ENCODE measurements at regions of chr1 and their contacts with region 1.

Region 1: DNA sequence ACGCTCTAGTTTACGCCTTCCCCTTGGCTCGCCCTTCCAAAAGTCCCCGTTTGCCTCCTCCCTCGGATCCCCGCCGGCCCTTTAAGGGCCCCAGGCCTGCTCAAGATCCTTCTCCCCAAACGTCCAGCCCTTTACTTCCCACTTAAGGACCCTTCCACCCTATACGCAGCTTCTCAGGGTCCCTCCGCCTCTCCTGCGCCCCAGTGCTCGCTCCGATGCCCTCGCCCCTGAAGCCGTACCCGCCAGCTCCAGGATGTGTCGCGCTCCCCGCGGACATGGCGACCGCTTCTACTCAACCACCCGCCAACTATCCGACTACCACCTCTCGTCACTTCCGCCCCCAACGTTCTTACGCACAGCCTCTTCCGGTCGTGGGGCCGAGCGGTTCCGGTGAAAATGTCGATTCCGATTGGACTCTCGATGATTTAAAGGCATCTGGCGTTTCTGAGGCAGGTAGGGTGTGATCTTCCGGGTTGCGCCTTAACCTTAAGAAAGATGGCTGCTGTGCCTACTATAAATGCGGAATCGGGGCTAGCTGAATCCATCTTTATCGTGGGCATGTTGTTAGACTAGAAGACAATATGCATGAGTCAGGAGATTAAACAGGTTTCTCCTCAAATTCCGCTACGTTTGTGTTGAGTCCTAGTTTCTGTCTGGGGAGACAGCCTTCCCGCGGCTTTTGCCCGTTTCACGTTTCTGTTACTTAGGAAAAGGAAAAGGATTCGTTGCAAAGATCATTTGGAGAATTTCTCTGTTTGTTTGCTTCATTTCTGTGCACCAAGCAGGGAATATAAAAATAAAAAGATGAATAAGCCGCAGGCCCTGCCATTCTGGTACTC is at the start of gene KHDC4:
- DNase-seq: peak; percentile 97
- ATAC-seq: peak; percentile 97
- H3K4me3 Mint-ChIP-seq: no peak within 1 kb of the TSS
- H3K27ac Mint-ChIP-seq: no peak within 1 kb of the TSS
- H3K4me1 Mint-ChIP-seq: peaks cover 46% of the 10 kb centered on the region
- H3K27me3 Mint-ChIP-seq: no peaks in the 10 kb centered on the region
- total RNA-seq, gene KHDC4: 68.7 to 97.5 TPM

Region 2: GRCh38 chr1:155569988-155570592 is 364.2 kb before region 1 on chr1:
- CTCF ChIA-PET with region 1: no interaction called
- POLR2A ChIA-PET with region 1: no interaction called
- intact Hi-C with region 1: no loop called
- DNase-seq: no peak
- ATAC-seq: no peak
- H3K4me3 Mint-ChIP-seq: no peak overlapping the region
- H3K27ac Mint-ChIP-seq: no peak overlapping the region
- H3K4me1 Mint-ChIP-seq: peaks cover 27% of the 10 kb centered on the region
- H3K27me3 Mint-ChIP-seq: no peaks in the 10 kb centered on the region

Region 3: GRCh38 chr1:155871390-155871789 is 62.9 kb before region 1 on chr1:
- CTCF ChIA-PET with region 1: no interaction called
- POLR2A ChIA-PET with region 1: no interaction called
- intact Hi-C with region 1: no loop called
- DNase-seq: no peak
- ATAC-seq: no peak
- H3K4me3 Mint-ChIP-seq: no peak overlapping the region
- H3K27ac Mint-ChIP-seq: no peak overlapping the region
- H3K4me1 Mint-ChIP-seq: no peaks in the 10 kb centered on the region
- H3K27me3 Mint-ChIP-seq: no peaks in the 10 kb centered on the region

Region 4: DNA sequence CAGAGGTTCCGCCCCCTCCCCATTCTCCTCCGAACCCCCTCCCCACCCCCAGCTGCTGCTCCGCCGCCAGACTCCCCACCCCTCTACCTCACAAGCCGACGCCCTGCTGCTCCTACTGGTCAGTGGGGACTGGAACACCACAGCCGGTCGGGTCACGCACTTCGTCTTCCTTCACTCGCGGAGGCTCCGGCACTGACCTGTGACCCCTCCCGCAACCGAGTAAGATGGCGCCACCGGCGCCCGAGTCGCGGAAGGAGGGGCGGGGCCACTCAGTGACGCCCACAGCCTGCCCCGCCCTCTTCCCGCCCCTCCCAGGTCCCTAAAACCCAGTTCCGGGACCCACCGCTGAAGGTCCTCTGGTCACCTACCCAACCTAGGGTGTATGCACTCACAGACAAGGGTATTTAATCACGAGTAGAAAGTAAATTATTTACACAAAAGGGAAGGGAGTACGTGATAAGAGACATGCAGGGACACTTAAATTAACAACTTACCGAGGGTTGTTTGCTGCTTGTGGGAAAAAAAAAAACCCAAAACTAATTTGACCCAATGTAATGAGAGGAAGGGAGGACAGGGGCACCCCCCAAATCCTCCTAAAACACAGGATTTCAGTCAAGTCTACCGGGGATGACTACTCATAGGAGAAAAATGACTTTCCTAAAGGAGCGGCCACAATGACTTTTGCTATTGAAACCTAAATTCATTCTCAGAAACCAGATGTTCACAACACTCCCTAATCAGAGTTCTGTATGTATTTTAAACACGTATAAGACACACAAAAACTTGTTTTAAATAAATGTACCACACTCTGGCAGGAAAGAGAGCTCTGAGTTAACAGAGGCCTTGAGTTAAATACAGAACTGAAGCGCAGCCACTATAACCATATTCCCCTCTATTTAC is 22.9 kb before region 1 on chr1 and contains the start of gene RIT1:
- CTCF ChIA-PET with region 1: interaction called, 5 read pairs
- POLR2A ChIA-PET with region 1: interaction called, 9 read pairs
- intact Hi-C with region 1: loop called (anchors 1 to 2 kb)
- DNase-seq: peak; percentile 93
- ATAC-seq: peak; percentile 85
- H3K4me3 Mint-ChIP-seq: peak within 1 kb of the TSS; percentile 85
- H3K27ac Mint-ChIP-seq: peak within 1 kb of the TSS; percentile 92
- H3K4me1 Mint-ChIP-seq: peaks cover 19% of the 10 kb centered on the region
- H3K27me3 Mint-ChIP-seq: no peaks in the 10 kb centered on the region
- total RNA-seq, gene RIT1: 20.3 to 23.0 TPM

Region 5: GRCh38 chr1:155978325-155978972 is 44.1 kb after region 1 on chr1 and contains the start of gene ARHGEF2:
- CTCF ChIA-PET with region 1: interaction called, 47 read pairs
- POLR2A ChIA-PET with region 1: interaction called, 62 read pairs
- intact Hi-C with region 1: loop called (anchors 1 kb)
- DNase-seq: peak; percentile 88
- ATAC-seq: peak; percentile 57
- H3K4me3 Mint-ChIP-seq: peak within 1 kb of the TSS; percentile 100
- H3K27ac Mint-ChIP-seq: peak within 1 kb of the TSS; percentile 96
- H3K4me1 Mint-ChIP-seq: peaks cover 68% of the 10 kb centered on the region
- H3K27me3 Mint-ChIP-seq: no peaks in the 10 kb centered on the region
- total RNA-seq, gene ARHGEF2: 135 to 216 TPM

Region 6: GRCh38 chr1:156020292-156021089 is 86.2 kb after region 1 on chr1 and contains the start of gene SSR2:
- CTCF ChIA-PET with region 1: interaction called, 3 read pairs
- POLR2A ChIA-PET with region 1: no interaction called
- intact Hi-C with region 1: loop called in 1 of 2 experiments (anchors 1 kb)
- DNase-seq: peak; percentile 92
- ATAC-seq: peak; percentile 100
- H3K4me3 Mint-ChIP-seq: peak within 1 kb of the TSS; percentile 94
- H3K27ac Mint-ChIP-seq: peak within 1 kb of the TSS; percentile 96
- H3K4me1 Mint-ChIP-seq: peaks cover 20% of the 10 kb centered on the region
- H3K27me3 Mint-ChIP-seq: peaks cover 4% of the 10 kb centered on the region
- total RNA-seq, gene SSR2: 143 to 197 TPM

Region 7: GRCh38 chr1:156193488-156194299 is 259.4 kb after region 1 on chr1 and contains the start of gene SLC25A44:
- CTCF ChIA-PET with region 1: no interaction called
- POLR2A ChIA-PET with region 1: no interaction called
- intact Hi-C with region 1: loop called in 1 of 2 experiments (anchors 2 kb)
- DNase-seq: peak; percentile 98
- ATAC-seq: peak; percentile 96
- H3K4me3 Mint-ChIP-seq: peak within 1 kb of the TSS; percentile 100
- H3K27ac Mint-ChIP-seq: peak within 1 kb of the TSS; percentile 97
- H3K4me1 Mint-ChIP-seq: peaks cover 43% of the 10 kb centered on the region
- H3K27me3 Mint-ChIP-seq: no peaks in the 10 kb centered on the region
- total RNA-seq, gene SLC25A44: 42.4 to 51.9 TPM

Region 8: GRCh38 chr1:156268336-156268735 is 334.0 kb after region 1 on chr1:
- CTCF ChIA-PET with region 1: no interaction called
- POLR2A ChIA-PET with region 1: no interaction called
- intact Hi-C with region 1: no loop called
- DNase-seq: no peak
- ATAC-seq: no peak
- H3K4me3 Mint-ChIP-seq: no peak overlapping the region
- H3K27ac Mint-ChIP-seq: no peak overlapping the region
- H3K4me1 Mint-ChIP-seq: peaks cover 2% of the 10 kb centered on the region
- H3K27me3 Mint-ChIP-seq: no peaks in the 10 kb centered on the region

Region 9: DNA sequence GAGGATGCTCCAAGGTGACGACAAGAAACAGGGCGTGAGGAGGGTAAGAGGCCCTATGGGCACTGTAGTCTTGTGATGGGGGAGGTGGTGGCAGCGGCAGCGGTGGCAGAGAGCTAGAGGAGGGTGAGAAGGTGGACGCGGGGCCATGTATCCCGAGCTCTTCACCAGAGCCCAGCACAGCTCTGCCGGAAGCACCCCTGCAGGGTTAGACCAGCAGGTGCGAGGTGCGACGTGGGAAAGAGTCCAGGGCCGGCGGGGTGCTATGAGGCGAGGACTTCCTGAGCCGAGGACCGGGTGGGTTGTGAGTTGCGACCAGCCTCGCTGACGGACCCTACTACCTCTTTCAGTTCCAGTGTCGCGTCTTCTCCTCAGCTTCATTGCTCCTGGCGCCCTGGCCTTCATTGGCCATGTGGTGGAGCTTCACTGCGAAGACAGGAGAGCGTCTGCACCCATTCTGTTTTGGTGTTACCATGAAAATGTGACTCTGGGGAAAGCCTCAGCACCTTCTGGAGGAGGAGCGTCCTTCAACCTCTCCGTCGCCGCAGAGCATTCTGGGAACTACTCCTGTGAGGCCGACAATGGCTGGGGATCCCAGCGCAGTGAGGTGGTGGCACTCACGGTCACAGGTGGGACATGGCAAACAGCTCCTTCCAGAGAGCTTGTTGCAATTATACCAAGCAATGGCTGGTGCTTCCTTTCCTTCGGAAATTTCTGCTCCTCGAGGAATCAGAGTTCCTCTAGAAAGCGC is 1991.3 kb after region 1 on chr1:
- CTCF ChIA-PET with region 1: no interaction called
- POLR2A ChIA-PET with region 1: no interaction called
- intact Hi-C with region 1: no loop called
- DNase-seq: no peak
- ATAC-seq: no peak
- H3K4me3 Mint-ChIP-seq: no peak overlapping the region
- H3K27ac Mint-ChIP-seq: no peak overlapping the region
- H3K4me1 Mint-ChIP-seq: no peaks in the 10 kb centered on the region
- H3K27me3 Mint-ChIP-seq: peaks cover 6% of the 10 kb centered on the region